Activated naive CD4-positive, alpha-beta T cell treated with anti-CD3 and anti-CD28 coated beads for 36 hours (primary cell): ENCODE measurements at regions of chr15 and their contacts with region 1.

Region 1: DNA sequence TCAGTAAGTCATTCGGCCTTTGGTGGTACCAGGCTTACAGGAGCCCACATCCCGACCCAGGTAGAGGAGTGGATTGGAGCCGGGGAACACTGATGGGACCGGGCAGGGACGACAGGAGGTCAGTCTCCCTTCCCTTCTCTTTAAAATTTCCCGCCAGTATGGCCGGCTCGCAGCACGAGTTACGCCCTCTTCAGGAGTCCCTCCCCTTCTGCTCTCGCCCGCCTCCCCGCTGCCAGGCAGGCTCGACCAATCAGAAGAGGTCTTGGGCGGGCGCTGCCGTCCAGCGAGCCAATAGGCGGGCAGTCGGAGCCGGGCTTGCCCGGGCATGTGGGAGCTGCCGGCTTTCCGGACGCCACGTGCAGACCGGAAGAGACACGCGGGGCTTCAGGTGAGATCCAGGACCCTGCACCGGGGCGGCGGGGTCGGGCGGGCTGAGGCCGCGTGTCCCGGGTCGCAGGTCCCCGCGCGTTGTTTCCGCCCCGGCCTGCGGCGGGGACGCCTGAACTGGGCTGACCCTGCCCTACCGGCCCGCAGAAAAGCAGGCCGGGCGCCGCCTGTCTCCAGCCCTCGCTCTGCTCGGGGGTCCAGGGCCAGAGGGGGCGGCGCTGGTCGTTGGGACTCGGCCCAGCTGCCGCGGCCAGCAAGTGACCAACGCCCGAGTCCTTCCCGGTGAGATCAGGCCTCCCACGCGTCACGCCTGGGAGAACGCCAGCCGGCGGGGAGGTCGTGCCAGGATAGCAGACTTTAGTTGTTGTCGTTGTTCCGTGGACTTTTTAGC is at the start of gene AEN:
- DNase-seq: peak; percentile 96
- H3K4me3 Mint-ChIP-seq: peak within 1 kb of the TSS; percentile 90
- H3K27ac Mint-ChIP-seq: peak within 1 kb of the TSS; percentile 97
- H3K4me1 Mint-ChIP-seq: peaks cover 35% of the 10 kb centered on the region
- H3K27me3 Mint-ChIP-seq: peaks cover 4% of the 10 kb centered on the region
- total RNA-seq, gene AEN: 85.2 to 87.2 TPM

Region 2: GRCh38 chr15:88467073-88467934 is 153.9 kb before region 1 on chr15 and contains the starts of genes MRPL46 and MRPS11:
- CTCF ChIA-PET with region 1: interaction called, 3 read pairs
- intact Hi-C with region 1: loop called (anchors 1 kb)
- DNase-seq: peak; percentile 93
- H3K4me3 Mint-ChIP-seq: peak within 1 kb of the TSS; percentile 91
- H3K27ac Mint-ChIP-seq: peak within 1 kb of the TSS; percentile 98
- H3K4me1 Mint-ChIP-seq: peaks cover 32% of the 10 kb centered on the region
- H3K27me3 Mint-ChIP-seq: no peaks in the 10 kb centered on the region
- total RNA-seq, gene MRPL46: 29.1 to 29.2 TPM
- total RNA-seq, gene MRPS11: 50.3 to 57.1 TPM

Region 3: GRCh38 chr15:88638626-88639372 is 17.6 kb after region 1 on chr15 and contains the start of gene ISG20:
- CTCF ChIA-PET with region 1: interaction called, 23 read pairs
- intact Hi-C with region 1: loop called (anchors 1 kb)
- DNase-seq: peak; percentile 99
- H3K4me3 Mint-ChIP-seq: peak within 1 kb of the TSS; percentile 81
- H3K27ac Mint-ChIP-seq: peak within 1 kb of the TSS; percentile 96
- H3K4me1 Mint-ChIP-seq: peaks cover 79% of the 10 kb centered on the region
- H3K27me3 Mint-ChIP-seq: no peaks in the 10 kb centered on the region
- total RNA-seq, gene ISG20: 51.2 to 56.5 TPM

Region 4: GRCh38 chr15:88664151-88664778 is 43.1 kb after region 1 on chr15:
- CTCF ChIA-PET with region 1: interaction called, 15 read pairs
- intact Hi-C with region 1: loop called (anchors 1 kb)
- DNase-seq: peak; percentile 78
- H3K4me3 Mint-ChIP-seq: no peak overlapping the region
- H3K27ac Mint-ChIP-seq: no peak overlapping the region
- H3K4me1 Mint-ChIP-seq: peaks cover 31% of the 10 kb centered on the region
- H3K27me3 Mint-ChIP-seq: peaks cover 2% of the 10 kb centered on the region

Region 5: DNA sequence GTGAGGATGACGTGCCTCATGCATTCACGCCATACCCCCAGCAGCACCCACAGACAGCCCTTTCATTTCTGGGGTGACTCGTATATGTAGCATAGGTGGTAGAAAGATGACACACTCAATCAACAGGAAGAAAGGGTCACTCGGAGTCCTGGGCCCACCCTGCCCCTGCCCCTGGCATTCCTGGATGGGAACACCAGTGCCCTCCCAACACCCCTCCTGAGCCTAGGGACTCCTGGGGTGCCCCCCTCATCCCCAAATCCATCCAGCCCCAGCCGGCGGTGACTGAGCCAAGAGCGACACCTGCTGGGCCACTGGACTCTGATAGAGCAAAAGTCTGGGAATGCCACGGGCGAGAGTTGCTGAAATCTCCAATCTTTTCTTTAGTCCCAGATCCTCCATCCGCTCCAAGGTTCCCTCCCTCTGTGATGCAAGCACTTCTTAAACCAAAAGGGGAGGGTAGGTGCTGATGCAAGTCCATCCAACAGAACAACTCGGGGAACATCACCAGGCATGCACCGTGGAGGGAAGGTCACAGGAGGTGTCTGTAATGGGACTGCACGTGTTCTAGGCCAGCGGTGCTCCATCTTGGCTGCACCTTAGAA is 213.1 kb after region 1 on chr15:
- CTCF ChIA-PET with region 1: interaction called, 4 read pairs
- intact Hi-C with region 1: loop called (anchors 1 kb)
- DNase-seq: peak; percentile 24
- H3K4me3 Mint-ChIP-seq: no peak overlapping the region
- H3K27ac Mint-ChIP-seq: no peak overlapping the region
- H3K4me1 Mint-ChIP-seq: peaks cover 5% of the 10 kb centered on the region
- H3K27me3 Mint-ChIP-seq: no peaks in the 10 kb centered on the region

Region 6: GRCh38 chr15:88949734-88950400 is 328.7 kb after region 1 on chr15:
- CTCF ChIA-PET with region 1: no interaction called
- intact Hi-C with region 1: no loop called
- DNase-seq: no peak
- H3K4me3 Mint-ChIP-seq: no peak overlapping the region
- H3K27ac Mint-ChIP-seq: no peak overlapping the region
- H3K4me1 Mint-ChIP-seq: peaks cover 3% of the 10 kb centered on the region
- H3K27me3 Mint-ChIP-seq: no peaks in the 10 kb centered on the region

Region 7: DNA sequence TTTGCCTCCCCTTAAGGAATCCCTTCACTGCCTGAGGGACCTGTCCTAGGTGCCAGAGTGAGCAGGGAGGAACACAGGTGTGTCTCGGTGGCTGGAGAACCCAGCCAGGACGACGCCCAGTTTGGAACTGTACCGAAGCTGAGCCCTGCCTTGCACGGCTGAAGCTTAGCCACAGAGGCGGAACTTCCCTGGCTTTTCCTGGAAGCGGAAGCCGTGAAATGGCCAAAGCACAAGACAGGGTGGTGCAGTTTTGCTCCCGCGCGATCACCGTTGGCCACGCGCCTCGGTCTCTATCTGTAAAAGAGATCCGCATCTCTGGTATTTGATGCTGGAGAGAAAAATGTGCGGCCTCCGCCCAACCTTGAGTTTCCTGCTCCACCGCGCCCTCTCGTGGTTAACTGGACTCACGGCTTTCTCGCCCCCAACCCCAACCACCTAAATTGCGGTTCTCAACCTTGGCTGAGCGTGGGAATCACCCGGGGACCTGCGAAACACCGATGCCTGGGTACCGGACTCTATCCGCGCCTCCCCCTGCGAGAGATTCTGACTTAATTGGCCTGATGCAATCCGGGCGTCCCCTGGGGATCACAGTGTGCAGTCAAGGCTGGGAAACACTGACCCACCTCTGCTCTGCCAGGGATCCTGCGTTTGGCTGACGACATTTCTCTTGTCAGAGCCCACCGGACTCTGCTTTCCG is 396.3 kb after region 1 on chr15:
- CTCF ChIA-PET with region 1: no interaction called
- intact Hi-C with region 1: loop called (anchors 1 kb)
- DNase-seq: peak; percentile 93
- H3K4me3 Mint-ChIP-seq: peak overlapping the region; percentile 43
- H3K27ac Mint-ChIP-seq: no peak overlapping the region
- H3K4me1 Mint-ChIP-seq: peaks cover 12% of the 10 kb centered on the region
- H3K27me3 Mint-ChIP-seq: peaks cover 3% of the 10 kb centered on the region

Region 8: GRCh38 chr15:89243691-89244471 is 622.7 kb after region 1 on chr15 and contains the start of gene FANCI:
- CTCF ChIA-PET with region 1: no interaction called
- intact Hi-C with region 1: loop called (anchors 5 kb)
- DNase-seq: peak; percentile 99
- H3K4me3 Mint-ChIP-seq: peak within 1 kb of the TSS; percentile 98
- H3K27ac Mint-ChIP-seq: peak within 1 kb of the TSS; percentile 93
- H3K4me1 Mint-ChIP-seq: peaks cover 31% of the 10 kb centered on the region
- H3K27me3 Mint-ChIP-seq: no peaks in the 10 kb centered on the region
- total RNA-seq, gene FANCI: 268 to 283 TPM